HepG2 (cell line): ENCODE measurements at regions of chr10 and their contacts with region 1.

Region 1: GRCh38 chr10:21510241-21511074 is 15.0 kb downstream of the SKIDA1 start:
- DNase-seq: no peak
- ATAC-seq: no peak
- H3K4me3 ChIP-seq: 0 out of 6 replicates have a peak overlapping the region, but pooled peaks of 1 of the 3 experiments have one; percentile 4
- H3K27ac ChIP-seq: peak overlapping the region; percentile 39
- H3K4me1 ChIP-seq: peaks cover 93% of the 10 kb centered on the region
- H3K27me3 ChIP-seq: no peaks in the 10 kb centered on the region
- CTCF ChIP-seq: no peak
- EP300 ChIP-seq: peak in 1 of 2 experiments; percentile 15; a peak in 1 of 4 replicates
- POLR2A ChIP-seq: no peak
- RAD21 ChIP-seq: no peak

Region 2: GRCh38 chr10:21336476-21337170 is 173.8 kb before region 1 on chr10:
- CTCF ChIA-PET with region 1: no interaction called
- POLR2A ChIA-PET with region 1: no interaction called
- in situ Hi-C with region 1: no loop called
- intact Hi-C with region 1: no loop called
- DNase-seq: peak; percentile 92
- ATAC-seq: peak; percentile 94
- H3K4me3 ChIP-seq: peak overlapping the region in 1 of 3 experiments; percentile 35; a peak in 2 of 6 replicates
- H3K27ac ChIP-seq: no peak overlapping the region
- H3K4me1 ChIP-seq: peaks cover 27% of the 10 kb centered on the region
- H3K27me3 ChIP-seq: no peaks in the 10 kb centered on the region
- CTCF ChIP-seq: peak; percentile 61
- EP300 ChIP-seq: peak in 1 of 2 experiments; percentile 63; a peak in 2 of 4 replicates
- POLR2A ChIP-seq: no peak
- RAD21 ChIP-seq: 0 out of 2 replicates have a peak, but pooled peaks have one; percentile 13

Region 3: DNA sequence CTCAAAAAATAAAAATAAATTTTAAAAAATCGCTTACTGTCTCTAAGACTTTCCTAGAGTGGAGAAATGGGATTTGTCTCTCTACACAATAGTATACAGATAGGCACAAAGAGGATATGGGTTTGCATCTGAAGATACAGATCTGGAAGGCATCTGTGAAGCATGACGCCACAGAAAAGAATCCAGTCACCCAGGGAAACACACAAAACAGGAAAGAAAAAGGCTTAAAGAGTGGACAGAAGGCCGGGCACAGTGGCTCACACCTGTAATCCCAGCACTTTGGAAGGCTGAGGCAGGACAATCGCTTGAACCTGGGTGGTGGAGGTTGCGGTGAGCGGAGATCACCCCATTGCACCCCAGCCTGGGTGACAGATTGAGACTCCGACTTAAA is 46.3 kb before region 1 on chr10:
- CTCF ChIA-PET with region 1: no interaction called
- POLR2A ChIA-PET with region 1: no interaction called
- in situ Hi-C with region 1: no loop called
- intact Hi-C with region 1: no loop called
- DNase-seq: no peak
- ATAC-seq: no peak; the same call in 2 of the 3 replicates
- H3K4me3 ChIP-seq: no peak overlapping the region
- H3K27ac ChIP-seq: no peak overlapping the region
- H3K4me1 ChIP-seq: no peaks in the 10 kb centered on the region
- H3K27me3 ChIP-seq: peaks cover 0 to 9% of the 10 kb centered on the region in 2 experiments; a peak in 3 of 5 replicates
- CTCF ChIP-seq: no peak
- EP300 ChIP-seq: no peak
- POLR2A ChIP-seq: no peak
- RAD21 ChIP-seq: no peak

Region 4: GRCh38 chr10:21525367-21526183 is 15.1 kb after region 1 on chr10 and contains the start of gene SKIDA1:
- CTCF ChIA-PET with region 1: no interaction called
- POLR2A ChIA-PET with region 1: interaction called, 92 read pairs
- in situ Hi-C with region 1: no loop called
- intact Hi-C with region 1: no loop called
- DNase-seq: peak; percentile 92
- ATAC-seq: peak; percentile 74
- H3K4me3 ChIP-seq: peak within 1 kb of the TSS; percentile 51 to 79 (median 77)
- H3K27ac ChIP-seq: peak within 1 kb of the TSS; percentile 95
- H3K4me1 ChIP-seq: peaks cover 38% of the 10 kb centered on the region
- H3K27me3 ChIP-seq: no peaks in the 10 kb centered on the region
- CTCF ChIP-seq: no peak; the same call in 1 of the 2 replicates
- EP300 ChIP-seq: peak; percentile 13 to 45; a peak in 2 of 4 replicates
- POLR2A ChIP-seq: peak in 1 of 2 experiments; percentile 78; a peak in 2 of 4 replicates
- RAD21 ChIP-seq: peak; percentile 63; the same call in 1 of the 2 replicates
- total RNA-seq, gene SKIDA1: 1.4 and 1.5 TPM in 2 replicates

Region 5: GRCh38 chr10:21533467-21534279 is 23.2 kb after region 1 on chr10 and contains the start of gene MLLT10:
- CTCF ChIA-PET with region 1: no interaction called
- POLR2A ChIA-PET with region 1: interaction called, 92 read pairs
- in situ Hi-C with region 1: no loop called
- intact Hi-C with region 1: no loop called
- DNase-seq: peak; percentile 94
- ATAC-seq: peak; percentile 85
- H3K4me3 ChIP-seq: peak within 1 kb of the TSS; percentile 76 to 84 (median 81)
- H3K27ac ChIP-seq: peak within 1 kb of the TSS; percentile 97
- H3K4me1 ChIP-seq: peaks cover 38% of the 10 kb centered on the region
- H3K27me3 ChIP-seq: no peaks in the 10 kb centered on the region; a peak in 1 of 5 replicates
- CTCF ChIP-seq: peak; percentile 33
- EP300 ChIP-seq: peak; percentile 17 to 60; a peak in 1 of 4 replicates
- POLR2A ChIP-seq: peak in 1 of 2 experiments; percentile 91; a peak in 2 of 4 replicates
- RAD21 ChIP-seq: peak; percentile 69; the same call in 1 of the 2 replicates
- total RNA-seq, gene MLLT10: 39.3 and 51.3 TPM in 2 replicates

Region 6: GRCh38 chr10:21885940-21886339 is 375.5 kb after region 1 on chr10:
- CTCF ChIA-PET with region 1: no interaction called
- POLR2A ChIA-PET with region 1: no interaction called
- in situ Hi-C with region 1: no loop called
- intact Hi-C with region 1: no loop called
- DNase-seq: no peak
- ATAC-seq: no peak
- H3K4me3 ChIP-seq: no peak overlapping the region
- H3K27ac ChIP-seq: no peak overlapping the region
- H3K4me1 ChIP-seq: no peaks in the 10 kb centered on the region
- H3K27me3 ChIP-seq: no peaks in the 10 kb centered on the region
- CTCF ChIP-seq: no peak
- EP300 ChIP-seq: no peak
- POLR2A ChIP-seq: no peak
- RAD21 ChIP-seq: no peak